AG04449 (cell line): ENCODE measurements at regions of chr14 and their contacts with region 1.

Region 1: GRCh38 chr14:68664225-68664681 is 128.6 kb downstream of the ZFP36L1 start:
- DNase-seq: no peak
- H3K4me3 ChIP-seq: no peak overlapping the region
- CTCF ChIP-seq: no peak

Region 2: DNA sequence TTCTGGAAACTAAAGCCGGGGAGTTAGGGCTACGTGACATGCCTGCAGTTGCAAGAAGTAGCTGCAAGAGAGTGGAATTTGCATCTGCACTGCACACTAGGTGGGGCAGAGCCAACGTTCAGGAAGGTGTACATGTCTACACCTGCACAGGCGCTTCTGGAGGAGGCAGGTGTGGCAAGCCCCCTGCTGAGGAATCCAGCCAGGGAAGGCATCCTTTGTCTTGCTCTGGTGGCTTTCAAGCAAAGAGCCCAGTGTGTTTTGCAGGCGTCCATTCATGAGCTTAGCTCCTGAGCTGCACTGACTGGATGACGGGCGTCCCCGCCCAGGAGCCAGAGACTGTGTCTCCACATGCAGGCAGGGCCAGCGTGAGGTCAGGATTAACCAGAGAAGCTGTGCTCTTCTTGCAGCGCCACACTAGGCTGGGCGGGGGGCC is 12.3 kb after region 1 on chr14:
- CTCF ChIA-PET with region 1: interaction called, 17 read pairs
- POLR2A ChIA-PET with region 1: no interaction called
- DNase-seq: no peak
- H3K4me3 ChIP-seq: no peak overlapping the region
- CTCF ChIP-seq: no peak